ENCODE measurements at regions of chr10 and their contacts with region 1.

Region 1: DNA sequence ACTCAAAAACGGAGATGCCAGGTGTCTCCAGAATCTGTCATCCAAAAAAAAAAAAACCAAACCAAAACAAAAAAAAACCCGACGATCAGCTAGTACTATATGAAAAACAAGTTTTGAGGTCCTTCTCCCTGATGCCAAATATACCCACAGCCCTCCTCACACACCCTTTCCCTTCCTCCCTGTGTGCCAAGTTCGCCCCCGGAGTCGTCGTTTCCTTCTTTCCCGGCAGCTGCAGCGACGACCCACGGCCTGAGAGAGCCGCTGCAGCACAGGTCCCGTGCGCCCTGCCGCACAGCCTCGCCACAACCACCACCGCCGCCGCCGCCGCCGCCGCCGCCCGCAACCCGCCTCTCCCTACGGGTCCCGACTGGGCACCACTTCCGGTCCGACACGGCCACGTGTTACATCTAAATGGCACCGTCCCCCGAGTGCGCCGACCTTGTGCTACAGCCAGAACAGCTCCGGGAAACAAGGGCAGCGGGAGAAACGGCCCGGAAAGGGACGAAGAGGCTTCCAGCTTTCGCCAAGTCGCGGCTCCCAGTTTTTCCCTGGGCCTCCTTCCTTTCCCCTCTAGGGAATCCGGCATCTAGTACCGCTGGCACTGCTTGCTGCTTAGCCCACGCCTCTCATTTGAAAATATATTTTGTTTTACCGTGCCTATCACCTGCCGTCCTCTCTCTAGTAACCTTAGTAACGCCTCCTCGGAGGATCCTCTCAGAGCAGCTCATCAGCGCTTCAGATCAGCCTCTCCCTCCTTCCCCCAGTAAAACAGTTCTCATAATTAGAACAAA is at the start of gene FRA10AC1:
- DNase-seq: peak; percentile 91 to 97 (median 96)
- ATAC-seq: peak; percentile 98 to 100
- H3K4me3 ChIP-seq: peak within 1 kb of the TSS; percentile 88
- H3K27ac ChIP-seq: peak within 1 kb of the TSS; percentile 86
- H3K4me1 ChIP-seq: no peaks in the 10 kb centered on the region
- H3K27me3 ChIP-seq: no peaks in the 10 kb centered on the region
- total RNA-seq, gene FRA10AC1: 16.1 to 28.0 (median 21.2) TPM

Region 2: DNA sequence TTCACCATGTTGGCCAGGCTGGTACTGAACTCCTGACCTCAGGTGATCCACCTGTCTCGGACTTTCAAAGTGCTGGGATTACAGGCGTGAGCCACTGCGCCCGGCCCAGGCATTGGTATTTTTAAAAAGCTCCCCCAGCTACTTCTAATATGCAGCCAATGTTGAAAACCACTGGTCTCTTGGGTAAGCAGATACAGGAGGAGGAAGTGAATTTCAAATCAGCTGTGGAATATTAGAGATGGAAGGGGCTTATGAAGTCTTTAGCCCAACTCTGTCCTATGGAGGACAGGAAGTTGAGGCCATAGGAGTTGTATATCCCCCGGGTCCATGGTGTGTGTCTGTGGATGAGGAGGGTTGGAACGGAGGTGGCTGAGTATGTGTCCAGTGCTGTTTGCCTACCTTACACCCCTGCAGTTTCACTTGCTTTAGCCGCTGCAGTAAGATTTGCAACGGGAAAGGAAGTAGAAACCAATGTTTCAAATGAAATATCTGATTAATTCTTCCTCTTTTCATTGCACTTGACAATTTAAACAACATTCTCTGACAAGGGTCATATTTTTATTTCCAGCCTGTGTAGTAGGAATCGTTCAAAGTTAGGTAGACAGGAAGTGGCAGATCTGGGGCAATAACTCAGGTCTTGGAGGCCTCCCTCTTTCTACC is 86.7 kb before region 1 on chr10:
- intact Hi-C with region 1: no loop called
- DNase-seq: no peak
- ATAC-seq: no peak
- H3K4me3 ChIP-seq: no peak overlapping the region
- H3K27ac ChIP-seq: no peak overlapping the region
- H3K4me1 ChIP-seq: no peaks in the 10 kb centered on the region
- H3K27me3 ChIP-seq: no peaks in the 10 kb centered on the region

Region 3: GRCh38 chr10:93816123-93816747 is 113.8 kb after region 1 on chr10:
- intact Hi-C with region 1: loop called in 3 of 4 experiments (anchors 5 to 10 kb)
- DNase-seq: peak; percentile 65 to 91 (median 86)
- ATAC-seq: peak; percentile 91 to 93
- H3K4me3 ChIP-seq: no peak overlapping the region
- H3K27ac ChIP-seq: no peak overlapping the region
- H3K4me1 ChIP-seq: no peaks in the 10 kb centered on the region
- H3K27me3 ChIP-seq: no peaks in the 10 kb centered on the region